ENCODE measurements at regions of chr9 and their contacts with region 1.

Region 1: DNA sequence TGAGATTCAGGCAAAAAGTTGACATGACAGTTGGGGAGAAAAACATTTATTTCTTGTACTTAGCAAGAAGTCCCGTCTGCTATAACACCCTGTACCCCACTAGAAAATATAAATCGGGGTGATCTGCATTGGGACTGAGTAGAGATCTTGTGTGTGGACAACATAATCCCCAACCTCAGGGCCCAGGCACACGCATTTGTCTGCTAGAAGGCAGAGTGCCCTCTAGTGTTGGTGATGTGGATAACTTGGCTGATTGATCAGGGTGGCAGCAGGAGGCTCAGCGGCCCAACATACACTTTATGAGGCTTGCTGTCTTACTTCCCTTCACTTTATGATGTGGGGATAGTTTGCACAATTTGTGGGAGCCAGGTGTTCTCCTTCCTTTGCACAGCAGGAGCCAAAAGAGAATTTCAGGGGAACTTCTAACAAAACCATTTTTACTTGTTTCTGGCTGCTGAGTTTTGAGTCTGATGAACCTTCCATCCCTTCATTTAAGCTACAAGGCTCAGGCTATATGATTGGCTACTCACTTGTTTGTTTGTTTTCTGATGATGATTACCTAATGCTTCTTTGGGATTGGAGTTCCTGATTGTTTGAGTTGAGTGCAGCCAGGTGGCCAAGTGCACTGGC is 263.2 kb downstream of the DMAC1 start:
- DNase-seq: peak; percentile 69
- H3K4me3 ChIP-seq: no peak overlapping the region
- H3K27ac ChIP-seq: no peak overlapping the region
- H3K4me1 ChIP-seq: no peaks in the 10 kb centered on the region
- H3K27me3 ChIP-seq: no peaks in the 10 kb centered on the region
- CTCF ChIP-seq: peak; percentile 66

Region 2: GRCh38 chr9:7402334-7403027 is 133.9 kb before region 1 on chr9:
- intact Hi-C with region 1: loop called (anchors 2 kb)
- DNase-seq: no peak
- H3K4me3 ChIP-seq: no peak overlapping the region
- H3K27ac ChIP-seq: no peak overlapping the region
- H3K4me1 ChIP-seq: no peaks in the 10 kb centered on the region
- H3K27me3 ChIP-seq: no peaks in the 10 kb centered on the region
- CTCF ChIP-seq: no peak

Measured in colonic mucosa (tissue), 4 donors.